CD4-positive, alpha-beta memory T cell (primary cell): ENCODE measurements at regions of chr21 and their contacts with region 1.

Region 1: DNA sequence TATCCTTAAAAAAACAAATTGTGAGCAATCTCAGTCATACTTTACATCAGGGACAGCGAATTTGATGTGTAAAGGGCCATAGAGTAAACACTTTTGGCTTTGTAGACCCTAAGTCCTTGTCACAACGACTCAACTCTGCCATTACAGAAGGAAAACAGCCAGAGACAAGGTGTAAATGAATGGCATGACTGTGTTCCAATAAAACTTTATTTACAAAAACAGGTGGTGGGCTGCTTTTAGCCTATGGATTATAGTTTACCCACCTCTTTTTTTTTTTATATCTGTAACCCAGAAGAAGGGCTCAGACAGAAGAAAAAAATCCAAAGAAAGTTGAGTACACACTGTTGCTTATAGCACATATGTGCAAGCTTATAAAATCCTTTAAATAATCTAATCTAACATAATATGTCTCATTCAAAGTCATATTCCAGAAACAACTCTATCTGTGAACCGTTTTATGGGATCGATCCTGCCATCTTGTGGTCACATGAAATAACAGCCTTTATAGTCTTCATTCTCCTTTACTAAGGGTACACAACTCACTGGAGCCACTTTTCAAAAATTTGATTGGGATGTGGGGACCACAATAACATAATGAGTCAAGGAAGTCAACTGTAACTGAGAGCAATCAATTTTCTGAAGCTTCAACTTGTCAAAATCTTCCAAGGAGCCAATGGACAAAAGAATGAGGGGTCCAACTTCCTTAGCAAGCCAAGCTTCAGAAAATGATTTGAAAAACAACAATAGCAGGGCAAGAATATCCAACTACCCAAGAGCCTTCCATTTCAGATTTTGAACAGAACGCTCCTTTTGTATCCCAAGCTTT is 142.2 kb upstream of the KRTAP19-8 start:
- DNase-seq: peak in 3 of 5 donors; percentile 28 to 49 (median 43)
- H3K4me3 ChIP-seq: peak overlapping the region; percentile 6 to 8
- H3K4me3 Mint-ChIP-seq: peak overlapping the region; percentile 70 to 94 (median 86)
- H3K27ac ChIP-seq: peak overlapping the region; percentile 56
- H3K27ac Mint-ChIP-seq: peak overlapping the region; percentile 93 to 95 (median 95)
- H3K4me1 ChIP-seq: peaks cover 91% of the 10 kb centered on the region
- H3K4me1 Mint-ChIP-seq: peaks cover 56 to 77% (median 67%) of the 10 kb centered on the region in 4 donors
- H3K27me3 ChIP-seq: no peaks in the 10 kb centered on the region
- H3K27me3 Mint-ChIP-seq: no peaks in the 10 kb centered on the region

Region 2: DNA sequence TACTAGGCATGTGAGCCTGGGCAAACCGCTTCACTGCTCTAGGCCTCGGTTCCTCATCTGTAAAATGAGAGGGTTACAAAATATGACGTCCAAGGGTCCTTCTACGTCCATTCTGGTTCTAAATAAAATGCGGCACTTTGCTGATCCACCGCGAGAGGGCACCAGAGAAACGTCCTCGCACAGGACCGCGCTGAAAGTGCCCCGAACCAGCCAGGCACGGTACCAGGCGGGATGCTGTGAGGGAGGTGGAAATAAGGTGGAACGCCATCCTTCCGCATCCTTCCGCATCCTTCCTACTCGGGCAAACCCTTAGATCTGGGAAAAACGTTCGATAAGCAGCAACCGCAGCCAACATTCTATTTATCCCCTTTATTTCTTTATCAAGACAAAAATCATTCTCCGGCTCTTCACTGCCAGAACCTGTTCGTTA is 81.9 kb before region 1 on chr21:
- CTCF ChIA-PET with region 1: interaction called, 142 read pairs
- POLR2A ChIA-PET with region 1: interaction called, 51 read pairs
- intact Hi-C with region 1: loop called (anchors 1 kb)
- DNase-seq: peak; percentile 64 to 68 (median 64)
- H3K4me3 ChIP-seq: no peak overlapping the region
- H3K4me3 Mint-ChIP-seq: peak overlapping the region; percentile 56 to 82 (median 72)
- H3K27ac ChIP-seq: no peak overlapping the region
- H3K27ac Mint-ChIP-seq: peak overlapping the region; percentile 14 to 75 (median 41)
- H3K4me1 ChIP-seq: peaks cover 29% of the 10 kb centered on the region
- H3K4me1 Mint-ChIP-seq: peaks cover 25 to 36% (median 31%) of the 10 kb centered on the region in 4 donors
- H3K27me3 ChIP-seq: no peaks in the 10 kb centered on the region
- H3K27me3 Mint-ChIP-seq: peaks cover 2 to 4% of the 10 kb centered on the region in 2 donors

Region 3: DNA sequence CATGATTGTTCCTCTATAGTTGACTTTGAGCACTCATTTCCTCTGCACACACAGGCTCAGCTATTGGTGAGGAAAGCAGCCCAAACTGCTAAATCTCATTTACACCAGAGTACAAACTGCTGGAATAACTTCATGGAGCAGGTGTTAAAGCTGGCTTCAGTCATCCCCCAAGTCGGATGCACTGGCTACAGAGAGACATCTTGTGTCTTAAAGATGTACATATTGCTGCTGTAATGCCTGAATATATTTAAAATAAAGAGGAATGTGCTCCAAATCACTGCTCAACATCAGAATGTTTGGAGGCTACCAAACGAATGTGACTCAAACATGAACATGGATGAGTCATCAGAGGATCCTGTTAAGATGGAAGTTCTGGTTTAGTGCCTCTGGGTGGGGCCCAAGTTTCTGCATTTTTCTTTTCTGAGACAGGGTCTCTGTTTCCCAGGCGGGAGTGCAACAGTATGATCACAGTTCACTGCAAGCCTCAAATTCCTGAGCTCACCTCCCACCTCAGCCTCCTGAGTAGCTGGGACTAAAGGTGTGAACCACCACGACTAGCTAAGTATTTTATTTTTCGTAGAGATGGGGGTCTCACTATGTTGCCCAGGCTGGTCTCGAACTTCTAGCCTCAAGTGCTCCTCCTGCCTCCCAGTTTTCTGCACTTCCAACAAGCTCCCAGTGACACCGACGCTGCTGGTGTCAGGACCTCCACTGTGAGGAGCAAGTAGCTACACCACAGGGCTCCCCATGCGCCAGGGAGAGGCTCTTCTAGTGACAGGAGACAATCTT is 63.1 kb before region 1 on chr21:
- CTCF ChIA-PET with region 1: interaction called, 23 read pairs
- POLR2A ChIA-PET with region 1: interaction called, 4 read pairs
- intact Hi-C with region 1: no loop called
- DNase-seq: no peak
- H3K4me3 ChIP-seq: no peak overlapping the region
- H3K4me3 Mint-ChIP-seq: no peak overlapping the region
- H3K27ac ChIP-seq: no peak overlapping the region
- H3K27ac Mint-ChIP-seq: no peak overlapping the region
- H3K4me1 ChIP-seq: no peaks in the 10 kb centered on the region
- H3K4me1 Mint-ChIP-seq: peaks cover 0 to 13% (median 4%) of the 10 kb centered on the region in 4 donors
- H3K27me3 ChIP-seq: no peaks in the 10 kb centered on the region
- H3K27me3 Mint-ChIP-seq: no peaks in the 10 kb centered on the region

Region 4: DNA sequence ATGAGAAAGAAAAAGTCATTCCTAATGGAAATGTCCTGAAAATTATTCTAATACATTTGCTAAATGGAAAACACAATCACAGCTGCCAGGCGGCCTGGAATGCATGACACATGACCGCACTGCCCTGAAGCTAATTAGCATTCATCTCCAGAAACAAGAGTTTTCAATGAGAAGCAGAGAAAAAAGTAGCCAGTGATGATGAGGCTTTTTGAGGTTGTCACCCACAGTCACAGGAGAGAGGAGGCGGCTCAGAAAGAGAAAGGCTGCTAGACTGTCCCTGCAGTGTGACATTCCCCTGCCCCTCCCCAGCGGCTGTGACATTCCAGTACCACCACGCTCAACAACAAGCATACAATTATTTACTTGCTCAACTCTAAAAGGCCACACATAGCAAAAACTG is 19.3 kb before region 1 on chr21:
- CTCF ChIA-PET with region 1: interaction called, 80 read pairs
- POLR2A ChIA-PET with region 1: interaction called, 94 read pairs
- intact Hi-C with region 1: loop called (anchors 1 kb)
- DNase-seq: no peak
- H3K4me3 ChIP-seq: no peak overlapping the region
- H3K4me3 Mint-ChIP-seq: peak overlapping the region; percentile 56 to 84 (median 72)
- H3K27ac ChIP-seq: no peak overlapping the region
- H3K27ac Mint-ChIP-seq: peak overlapping the region; percentile 73 to 96 (median 86)
- H3K4me1 ChIP-seq: peaks cover 87% of the 10 kb centered on the region
- H3K4me1 Mint-ChIP-seq: peaks cover 48 to 82% (median 70%) of the 10 kb centered on the region in 4 donors
- H3K27me3 ChIP-seq: no peaks in the 10 kb centered on the region
- H3K27me3 Mint-ChIP-seq: no peaks in the 10 kb centered on the region

Region 5: GRCh38 chr21:31326522-31327242 is 146.2 kb after region 1 on chr21:
- CTCF ChIA-PET with region 1: no interaction called
- POLR2A ChIA-PET with region 1: no interaction called
- intact Hi-C with region 1: no loop called
- DNase-seq: peak; percentile 41 to 69 (median 52)
- H3K4me3 ChIP-seq: no peak overlapping the region
- H3K4me3 Mint-ChIP-seq: peak overlapping the region; percentile 73 to 90 (median 79)
- H3K27ac ChIP-seq: peak overlapping the region; percentile 35
- H3K27ac Mint-ChIP-seq: peak overlapping the region; percentile 61 to 94 (median 82)
- H3K4me1 ChIP-seq: peaks cover 18% of the 10 kb centered on the region
- H3K4me1 Mint-ChIP-seq: peaks cover 18 to 33% (median 21%) of the 10 kb centered on the region in 4 donors
- H3K27me3 ChIP-seq: no peaks in the 10 kb centered on the region
- H3K27me3 Mint-ChIP-seq: no peaks in the 10 kb centered on the region

Region 6: DNA sequence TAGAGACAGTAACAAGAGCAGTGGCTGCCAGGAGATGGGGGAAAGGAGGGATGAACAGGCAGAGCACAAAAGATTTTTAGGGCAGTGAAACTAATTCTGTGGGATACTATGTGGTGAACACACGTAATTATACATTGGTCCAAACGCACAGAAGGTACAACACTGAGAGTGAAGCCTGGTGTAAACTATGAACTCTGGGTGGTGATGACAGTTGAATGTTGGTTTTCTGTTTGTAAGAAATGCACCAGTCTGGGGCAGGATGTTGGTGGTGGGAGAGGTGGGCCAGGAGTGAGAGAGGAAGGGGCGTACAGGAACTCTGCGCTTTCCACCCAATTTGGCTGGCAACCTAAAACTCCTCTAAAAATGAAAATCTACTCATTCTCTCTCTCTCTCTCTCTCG is 213.8 kb after region 1 on chr21:
- CTCF ChIA-PET with region 1: no interaction called
- POLR2A ChIA-PET with region 1: no interaction called
- intact Hi-C with region 1: no loop called
- DNase-seq: peak in 1 of 5 donors; percentile 11
- H3K4me3 ChIP-seq: no peak overlapping the region
- H3K4me3 Mint-ChIP-seq: peak overlapping the region in 1 of 8 donors; percentile 3
- H3K27ac ChIP-seq: no peak overlapping the region
- H3K27ac Mint-ChIP-seq: peak overlapping the region in 5 of 7 donors; percentile 1 to 86 (median 30)
- H3K4me1 ChIP-seq: peaks cover 28% of the 10 kb centered on the region
- H3K4me1 Mint-ChIP-seq: peaks cover 24 to 39% (median 31%) of the 10 kb centered on the region in 4 donors
- H3K27me3 ChIP-seq: no peaks in the 10 kb centered on the region
- H3K27me3 Mint-ChIP-seq: no peaks in the 10 kb centered on the region

Region 7: GRCh38 chr21:31558962-31559367 is 378.5 kb after region 1 on chr21:
- CTCF ChIA-PET with region 1: interaction called, 11 read pairs
- POLR2A ChIA-PET with region 1: interaction called, 17 read pairs
- intact Hi-C with region 1: no loop called
- DNase-seq: peak; percentile 89 to 94 (median 90)
- H3K4me3 ChIP-seq: peak overlapping the region; percentile 43 to 78
- H3K4me3 Mint-ChIP-seq: peak overlapping the region in 7 of 8 donors; percentile 85 to 94 (median 93)
- H3K27ac ChIP-seq: peak overlapping the region; percentile 1
- H3K27ac Mint-ChIP-seq: peak overlapping the region in 1 of 7 donors; percentile 41
- H3K4me1 ChIP-seq: peaks cover 27% of the 10 kb centered on the region
- H3K4me1 Mint-ChIP-seq: peaks cover 14 to 45% (median 30%) of the 10 kb centered on the region in 4 donors
- H3K27me3 ChIP-seq: no peaks in the 10 kb centered on the region
- H3K27me3 Mint-ChIP-seq: peaks cover 7 to 12% of the 10 kb centered on the region in 2 donors

Region 8: GRCh38 chr21:31659536-31660258 is 479.2 kb after region 1 on chr21 and contains the start of gene SOD1:
- CTCF ChIA-PET with region 1: no interaction called
- POLR2A ChIA-PET with region 1: no interaction called
- intact Hi-C with region 1: loop called (anchors 1 kb)
- DNase-seq: peak; percentile 95 to 97 (median 96)
- H3K4me3 ChIP-seq: peak within 1 kb of the TSS; percentile 70 to 79
- H3K4me3 Mint-ChIP-seq: peak within 1 kb of the TSS; percentile 98 to 100 (median 100)
- H3K27ac ChIP-seq: peak within 1 kb of the TSS; percentile 77
- H3K27ac Mint-ChIP-seq: peak within 1 kb of the TSS; percentile 81 to 100 (median 99)
- H3K4me1 ChIP-seq: peaks cover 64% of the 10 kb centered on the region
- H3K4me1 Mint-ChIP-seq: peaks cover 43 to 80% (median 60%) of the 10 kb centered on the region in 4 donors
- H3K27me3 ChIP-seq: no peaks in the 10 kb centered on the region
- H3K27me3 Mint-ChIP-seq: no peaks in the 10 kb centered on the region
- total RNA-seq, gene SOD1: 178 to 198 TPM

Region 9: DNA sequence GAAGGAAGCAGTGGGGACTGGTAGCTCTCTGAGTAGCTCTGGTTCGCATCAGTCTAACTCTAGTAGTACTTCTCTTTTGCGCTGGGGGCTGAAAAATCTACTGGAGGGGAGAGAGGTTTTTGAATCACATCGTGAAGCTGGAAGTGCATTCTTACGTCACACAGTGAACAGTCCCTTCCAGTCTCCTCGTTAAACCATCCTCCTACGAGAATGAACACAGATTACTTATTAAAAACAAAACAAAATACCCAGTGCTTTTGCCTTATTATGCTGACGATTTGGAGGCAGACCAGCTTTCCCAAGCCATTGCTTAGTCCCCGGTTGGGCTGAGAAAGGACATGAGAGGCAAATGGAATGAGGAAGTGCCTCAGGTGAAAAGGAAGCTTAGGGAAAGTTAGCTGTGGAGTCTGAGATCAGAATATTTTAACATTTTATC is 708.5 kb after region 1 on chr21:
- CTCF ChIA-PET with region 1: no interaction called
- POLR2A ChIA-PET with region 1: no interaction called
- intact Hi-C with region 1: no loop called
- DNase-seq: no peak
- H3K4me3 ChIP-seq: no peak overlapping the region
- H3K4me3 Mint-ChIP-seq: no peak overlapping the region
- H3K27ac ChIP-seq: no peak overlapping the region
- H3K27ac Mint-ChIP-seq: no peak overlapping the region
- H3K4me1 ChIP-seq: no peaks in the 10 kb centered on the region
- H3K4me1 Mint-ChIP-seq: no peaks in the 10 kb centered on the region
- H3K27me3 ChIP-seq: no peaks in the 10 kb centered on the region
- H3K27me3 Mint-ChIP-seq: peaks cover 6 to 14% of the 10 kb centered on the region in 2 donors